ENCODE measurements at regions of chr3 and their contacts with region 1.

Region 1: GRCh38 chr3:56238299-56238698 is 230.0 kb downstream of the ERC2 start:
- DNase-seq: no peak
- H3K4me3 ChIP-seq: no peak overlapping the region
- H3K27ac ChIP-seq: no peak overlapping the region
- H3K4me1 ChIP-seq: no peaks in the 10 kb centered on the region
- H3K27me3 ChIP-seq: no peaks in the 10 kb centered on the region
- CTCF ChIP-seq: no peak

Region 2: DNA sequence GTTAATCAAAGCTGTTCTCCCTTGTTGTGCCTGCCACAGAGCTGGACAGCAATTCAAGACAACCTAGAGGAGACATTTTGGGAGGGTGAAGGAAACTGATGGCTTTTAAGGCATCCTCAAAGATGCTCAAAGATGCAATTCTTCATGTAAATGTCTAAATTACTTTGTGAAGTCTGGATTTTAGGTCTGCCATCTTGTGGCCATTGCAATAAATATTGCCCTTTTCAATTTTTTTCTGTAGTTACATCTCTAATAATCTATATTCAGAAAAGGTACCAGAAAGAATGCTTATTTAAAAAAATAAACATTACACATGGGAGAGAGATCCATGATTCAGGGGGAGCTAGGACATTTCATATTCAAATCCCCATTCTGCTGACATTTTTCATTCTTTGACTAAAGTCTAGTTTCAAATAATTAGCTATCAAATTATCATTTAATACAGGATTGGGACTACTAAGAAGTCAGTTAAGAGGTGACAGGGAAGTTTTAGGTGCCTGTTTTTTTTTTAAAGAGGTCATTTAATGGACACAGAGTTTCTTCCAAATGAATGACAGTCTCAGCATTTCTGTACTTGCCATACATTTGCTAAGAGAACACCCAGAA is 491.4 kb before region 1 on chr3:
- CTCF ChIA-PET with region 1: no interaction called
- dilution Hi-C with region 1: no loop called
- in situ Hi-C with region 1: loop called in 1 of 2 experiments (anchors 25 kb)
- intact Hi-C with region 1: no loop called
- DNase-seq: no peak
- H3K4me3 ChIP-seq: no peak overlapping the region
- H3K27ac ChIP-seq: no peak overlapping the region
- H3K4me1 ChIP-seq: peaks cover 11% of the 10 kb centered on the region
- H3K27me3 ChIP-seq: no peaks in the 10 kb centered on the region
- CTCF ChIP-seq: peak; percentile 35 to 50

Region 3: GRCh38 chr3:56189536-56189935 is 48.8 kb before region 1 on chr3:
- CTCF ChIA-PET with region 1: no interaction called
- dilution Hi-C with region 1: loop called (anchors 5 kb)
- in situ Hi-C with region 1: no loop called
- intact Hi-C with region 1: no loop called
- DNase-seq: no peak
- H3K4me3 ChIP-seq: no peak overlapping the region
- H3K27ac ChIP-seq: no peak overlapping the region
- H3K4me1 ChIP-seq: no peaks in the 10 kb centered on the region
- H3K27me3 ChIP-seq: no peaks in the 10 kb centered on the region
- CTCF ChIP-seq: no peak

Measured in mammary epithelial cell (primary cell).